GM13976 (cell line): ENCODE measurements at regions of chr1 and their contacts with region 1.

Region 1: DNA sequence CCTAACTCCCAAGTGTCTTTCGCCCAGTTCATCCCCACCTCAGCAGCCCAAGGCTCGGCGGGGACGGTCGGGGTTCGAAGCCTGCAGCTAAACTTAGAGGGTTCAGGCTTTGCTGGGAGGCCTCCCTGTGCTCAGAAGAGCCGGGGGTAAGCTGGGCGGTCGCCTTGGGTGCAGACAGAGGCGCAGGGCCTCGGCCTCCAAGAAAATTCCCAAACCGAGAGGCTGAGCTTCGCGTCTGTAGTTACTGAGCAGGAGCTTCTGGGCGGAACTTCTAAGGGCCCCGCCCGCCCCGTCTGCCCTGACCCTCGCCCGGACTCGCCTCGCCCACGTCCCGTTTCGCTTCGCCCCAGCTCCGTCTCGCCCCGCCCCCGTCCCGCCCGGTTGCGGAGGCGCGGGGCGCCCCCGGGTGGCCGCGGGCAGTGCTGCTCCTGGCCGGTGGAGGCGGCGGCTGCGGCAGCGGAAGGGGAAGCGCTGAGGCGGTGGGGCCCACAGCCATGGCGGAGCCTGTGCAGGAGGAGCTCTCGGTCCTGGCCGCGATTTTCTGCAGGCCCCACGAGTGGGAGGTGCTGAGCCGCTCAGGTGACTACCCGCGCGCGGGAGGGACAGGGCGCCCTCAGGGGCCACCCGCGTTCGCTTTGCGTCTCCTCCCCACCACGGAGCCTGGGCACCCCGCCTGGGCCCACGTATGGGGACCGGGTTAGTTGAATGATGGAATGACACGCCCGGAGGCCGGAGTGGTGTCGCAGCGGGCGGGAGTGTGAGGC is at the start of gene RWDD3:
- DNase-seq: peak; percentile 95
- CTCF ChIP-seq: peak; percentile 96

Region 2: GRCh38 chr1:94727846-94728715 is 505.8 kb before region 1 on chr1:
- in situ Hi-C with region 1: no loop called
- DNase-seq: no peak
- CTCF ChIP-seq: no peak

Region 3: DNA sequence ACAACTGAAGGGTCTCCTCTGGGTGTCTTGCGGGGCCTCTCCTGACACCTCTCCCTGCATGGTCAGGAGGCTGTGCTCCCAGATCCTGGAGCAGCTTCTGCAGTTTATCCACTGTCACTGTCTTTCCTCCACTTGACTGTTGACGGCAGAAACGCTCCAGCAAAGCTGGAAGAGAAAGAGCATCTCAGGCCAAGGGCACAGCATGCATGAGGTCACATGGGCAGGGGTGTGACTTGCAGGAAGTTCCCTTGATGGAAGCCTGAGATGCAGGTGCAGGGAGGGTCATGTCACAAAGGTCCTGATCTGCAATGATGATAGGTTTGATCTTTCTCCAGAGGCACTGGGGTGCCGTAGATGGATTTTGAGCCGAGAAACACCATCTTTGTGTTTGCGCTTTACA is 390.5 kb before region 1 on chr1:
- in situ Hi-C with region 1: no loop called
- DNase-seq: no peak
- CTCF ChIP-seq: no peak

Region 4: GRCh38 chr1:94854458-94855306 is 379.2 kb before region 1 on chr1:
- in situ Hi-C with region 1: loop called (anchors 25 kb)
- DNase-seq: peak; percentile 86
- CTCF ChIP-seq: peak; percentile 85

Region 5: DNA sequence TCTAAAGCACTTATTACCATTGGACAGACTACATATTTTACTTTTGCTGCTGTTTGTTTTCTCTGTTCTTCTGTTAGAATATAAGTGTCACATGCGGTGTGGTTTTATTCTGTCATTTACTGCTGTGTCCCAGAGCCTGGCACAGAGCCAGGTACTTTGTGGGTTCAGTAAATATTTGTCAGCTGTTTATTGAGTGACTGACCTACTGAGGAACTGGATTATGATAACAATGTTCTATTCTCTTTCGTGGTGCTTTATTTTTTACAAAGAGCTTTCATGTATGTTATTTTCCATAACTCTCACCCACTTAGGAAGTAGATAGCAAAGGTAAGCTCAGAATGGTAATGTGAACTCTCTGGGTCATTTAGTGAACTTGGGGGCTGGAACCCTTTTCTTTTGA is 118.8 kb after region 1 on chr1:
- in situ Hi-C with region 1: no loop called
- DNase-seq: no peak
- CTCF ChIP-seq: no peak

Region 6: GRCh38 chr1:95635811-95636210 is 401.9 kb after region 1 on chr1:
- in situ Hi-C with region 1: no loop called
- DNase-seq: no peak
- CTCF ChIP-seq: no peak